ENCODE measurements at regions of chr22 and their contacts with region 1.

Region 1: GRCh38 chr22:43036282-43036829 is 21.4 kb upstream of the PACSIN2 start:
- DNase-seq: no peak
- CTCF ChIP-seq: no peak

Region 2: GRCh38 chr22:42895087-42895486 is 141.3 kb before region 1 on chr22:
- CTCF ChIA-PET with region 1: interaction called, 14 read pairs
- POLR2A ChIA-PET with region 1: no interaction called
- DNase-seq: peak; percentile 64
- CTCF ChIP-seq: no peak

Region 3: GRCh38 chr22:42964994-42965699 is 71.2 kb before region 1 on chr22:
- CTCF ChIA-PET with region 1: interaction called, 11 read pairs
- POLR2A ChIA-PET with region 1: no interaction called
- DNase-seq: peak; percentile 57
- CTCF ChIP-seq: no peak

Region 4: GRCh38 chr22:43222262-43222661 is 185.9 kb after region 1 on chr22:
- CTCF ChIA-PET with region 1: no interaction called
- POLR2A ChIA-PET with region 1: no interaction called
- DNase-seq: no peak
- CTCF ChIP-seq: no peak